ENCODE measurements at regions of chr9 and their contacts with region 1.

Region 1: DNA sequence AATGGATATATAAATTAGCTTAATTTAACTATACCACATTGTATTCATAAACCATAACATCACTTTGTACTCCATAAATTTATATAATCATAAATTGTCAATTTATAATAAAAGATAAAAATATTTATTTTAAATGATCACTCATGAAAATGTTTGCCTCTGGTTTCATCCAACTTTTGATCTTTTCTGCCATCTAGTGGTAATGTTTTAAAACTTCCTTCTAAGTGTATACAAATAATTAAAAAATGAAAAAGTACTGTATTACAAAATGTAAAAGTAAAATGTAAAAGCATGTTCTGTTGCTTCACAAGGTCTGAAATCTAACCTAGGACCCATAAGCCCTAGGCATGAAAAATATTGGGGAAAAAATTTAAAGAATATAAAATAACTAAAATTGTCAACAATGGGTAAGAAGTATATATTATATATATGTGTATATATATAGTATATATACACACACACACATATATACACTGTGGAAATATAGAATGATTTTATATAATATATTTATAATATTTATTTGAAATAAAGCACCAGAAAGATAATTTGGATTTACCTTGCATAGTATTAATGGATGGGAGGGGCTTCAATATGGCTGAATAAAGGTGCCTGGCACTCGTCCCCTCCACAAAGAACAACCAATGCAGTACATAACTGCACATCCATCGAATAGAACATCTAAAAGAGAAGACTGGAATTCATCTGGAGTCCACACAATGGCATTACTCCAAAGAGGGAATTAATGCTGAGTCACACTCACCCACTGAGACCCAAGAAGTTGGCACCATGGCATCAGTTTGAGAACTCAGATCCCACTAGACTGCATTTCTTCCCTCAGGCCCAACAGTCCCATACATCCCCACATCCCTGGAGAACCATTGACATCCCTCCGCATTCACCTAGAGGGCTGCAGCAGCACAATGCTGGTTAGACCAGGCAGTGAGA is 32.5 kb downstream of the ANXA1 start:
- DNase-seq: no peak
- H3K4me3 ChIP-seq: no peak overlapping the region
- H3K27ac ChIP-seq: no peak overlapping the region
- H3K4me1 ChIP-seq: no peaks in the 10 kb centered on the region
- H3K27me3 ChIP-seq: peaks cover 0 to 13% (median 0%) of the 10 kb centered on the region in 7 donors
- CTCF ChIP-seq: peak in 10 of 11 experiments; percentile 24 to 65 (median 52)
- POLR2A ChIP-seq: no peak

Region 2: DNA sequence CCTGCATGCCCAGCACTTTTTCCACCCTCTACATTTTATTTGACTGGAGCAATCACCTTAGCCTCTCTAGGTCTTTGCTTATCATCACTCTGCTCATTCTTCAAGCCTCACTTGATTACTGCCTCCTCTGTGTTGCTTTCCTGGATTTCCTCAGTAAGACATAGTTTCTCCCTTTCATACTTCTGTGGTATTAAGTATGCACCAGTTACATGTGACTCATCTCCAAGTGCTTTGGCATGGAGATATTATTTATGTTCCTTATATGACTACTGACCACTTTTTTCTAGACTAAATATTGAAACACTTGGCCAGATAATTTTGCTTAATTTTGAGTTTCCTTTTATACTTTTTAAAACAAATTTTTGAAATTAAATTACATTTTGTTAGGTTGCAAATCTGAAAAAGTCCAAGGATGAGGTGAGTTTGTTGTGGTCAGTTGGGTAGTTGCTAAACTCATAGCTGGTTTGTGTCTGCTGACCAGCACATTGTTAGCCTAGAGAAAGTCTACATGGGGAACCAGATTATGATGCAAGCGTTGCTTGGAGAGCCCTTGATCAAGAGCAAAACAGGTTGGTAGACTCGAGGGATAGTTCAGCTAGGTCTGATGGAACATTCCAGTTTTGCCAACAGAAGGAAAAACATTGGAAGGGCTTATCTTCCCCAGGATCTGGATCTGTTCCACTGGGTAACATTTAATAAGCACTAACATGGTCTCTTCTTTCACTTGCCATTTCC is 522.6 kb before region 1 on chr9:
- intact Hi-C with region 1: no loop called
- DNase-seq: no peak
- H3K4me3 ChIP-seq: no peak overlapping the region
- H3K27ac ChIP-seq: no peak overlapping the region
- H3K4me1 ChIP-seq: no peaks in the 10 kb centered on the region
- H3K27me3 ChIP-seq: no peaks in the 10 kb centered on the region
- CTCF ChIP-seq: no peak
- POLR2A ChIP-seq: no peak

Region 3: GRCh38 chr9:72856972-72857623 is 327.1 kb before region 1 on chr9:
- intact Hi-C with region 1: loop called (anchors 10 kb)
- DNase-seq: no peak
- H3K4me3 ChIP-seq: no peak overlapping the region
- H3K27ac ChIP-seq: peak overlapping the region in 1 of 8 donors; percentile 25
- H3K4me1 ChIP-seq: peaks cover 0 to 13% (median 7%) of the 10 kb centered on the region in 6 donors
- H3K27me3 ChIP-seq: no peaks in the 10 kb centered on the region
- CTCF ChIP-seq: peak in 10 of 11 experiments; percentile 10 to 63 (median 48)
- POLR2A ChIP-seq: no peak

Region 4: DNA sequence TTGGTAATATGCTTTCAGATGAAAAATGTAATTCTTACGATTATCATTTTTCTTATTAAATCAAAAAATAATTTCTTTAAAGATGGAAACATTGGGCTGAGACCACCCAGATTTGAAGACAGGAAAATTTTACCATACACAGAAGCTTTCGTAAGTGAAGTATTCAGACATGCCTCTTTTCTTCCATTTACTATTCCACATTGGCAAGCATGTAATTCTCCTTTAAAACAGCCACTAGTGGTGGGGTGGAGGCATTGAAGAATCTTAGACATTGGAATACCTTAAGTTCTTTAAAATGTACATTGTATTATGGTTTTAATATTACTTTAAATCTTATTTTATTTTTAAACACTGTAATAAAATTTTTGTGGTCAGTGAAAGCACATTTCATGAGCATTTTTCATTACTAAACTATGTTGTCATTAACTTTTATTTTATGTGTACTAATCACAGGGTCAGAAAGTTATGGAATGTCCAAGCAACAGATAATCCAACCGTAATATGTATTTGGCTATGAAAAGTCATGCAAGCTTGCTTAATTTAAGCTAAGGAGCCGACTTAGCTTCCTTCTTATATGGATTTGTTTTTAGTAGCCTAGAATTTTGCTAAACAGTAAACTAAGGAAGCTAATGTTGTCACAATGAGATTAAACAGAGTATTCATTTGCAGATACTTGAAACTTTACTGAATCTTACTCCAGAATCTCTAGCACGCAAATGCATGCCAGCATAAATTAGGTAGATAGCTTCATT is 133.9 kb before region 1 on chr9:
- intact Hi-C with region 1: no loop called
- DNase-seq: no peak
- H3K4me3 ChIP-seq: no peak overlapping the region
- H3K27ac ChIP-seq: no peak overlapping the region
- H3K4me1 ChIP-seq: no peaks in the 10 kb centered on the region
- H3K27me3 ChIP-seq: no peaks in the 10 kb centered on the region
- CTCF ChIP-seq: no peak
- POLR2A ChIP-seq: no peak

Region 5: GRCh38 chr9:73104921-73105320 is 79.3 kb before region 1 on chr9:
- intact Hi-C with region 1: loop called (anchors 5 kb)
- DNase-seq: no peak
- H3K4me3 ChIP-seq: no peak overlapping the region
- H3K27ac ChIP-seq: no peak overlapping the region
- H3K4me1 ChIP-seq: no peaks in the 10 kb centered on the region
- H3K27me3 ChIP-seq: no peaks in the 10 kb centered on the region
- CTCF ChIP-seq: no peak
- POLR2A ChIP-seq: no peak

Measured in spleen (tissue), 13 donors.